Naive thymus-derived CD4-positive, alpha-beta T cell (primary cell): ENCODE measurements at regions of chr3 and their contacts with region 1.

Region 1: DNA sequence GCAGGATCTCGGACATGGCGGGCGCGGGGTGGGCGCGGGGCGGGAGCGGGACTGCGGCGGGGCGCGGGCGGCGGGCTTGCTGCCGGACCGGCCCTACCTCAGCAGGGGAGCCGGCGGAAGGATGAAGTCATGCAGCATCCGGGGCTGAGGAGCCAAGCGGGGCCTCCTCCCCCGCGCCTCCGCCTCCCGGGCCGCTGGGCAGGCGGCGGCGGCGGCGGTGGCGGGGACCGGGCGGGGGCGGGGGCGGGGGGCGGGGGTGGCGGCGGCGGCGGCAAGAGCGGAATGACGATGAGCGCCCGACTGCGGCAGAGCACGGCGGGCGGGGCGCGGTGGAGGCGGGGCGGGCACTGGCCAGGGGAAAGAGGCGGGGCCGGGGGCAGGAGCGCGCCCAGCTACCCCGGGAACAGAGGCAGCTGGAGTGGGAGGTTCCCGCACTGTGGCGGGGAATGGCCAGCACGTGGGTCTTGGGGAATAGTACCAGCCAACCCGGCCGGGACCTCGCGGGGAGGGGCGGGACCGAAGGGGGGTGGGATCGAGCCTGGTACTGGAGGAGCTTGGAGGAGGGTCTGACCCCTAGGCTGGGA is at the start of gene CAMK2N2:
- DNase-seq: peak in 2 of 9 donors; percentile 26 to 72
- ATAC-seq: peak; percentile 62
- H3K4me3 ChIP-seq: peak within 1 kb of the TSS; percentile 35
- H3K4me3 Mint-ChIP-seq: peak within 1 kb of the TSS; percentile 80 to 98 (median 88)
- H3K27ac ChIP-seq: no peak within 1 kb of the TSS
- H3K27ac Mint-ChIP-seq: peak within 1 kb of the TSS in 6 of 9 donors; percentile 0 to 63 (median 6)
- H3K4me1 ChIP-seq: peaks cover 15 to 20% of the 10 kb centered on the region in 2 donors
- H3K4me1 Mint-ChIP-seq: peaks cover 18 to 27% (median 21%) of the 10 kb centered on the region in 7 donors
- H3K27me3 ChIP-seq: peaks cover 0 to 18% of the 10 kb centered on the region in 2 donors
- H3K27me3 Mint-ChIP-seq: peaks cover 37 to 57% (median 38%) of the 10 kb centered on the region in 5 donors
- total RNA-seq, gene CAMK2N2: not detected

Region 2: DNA sequence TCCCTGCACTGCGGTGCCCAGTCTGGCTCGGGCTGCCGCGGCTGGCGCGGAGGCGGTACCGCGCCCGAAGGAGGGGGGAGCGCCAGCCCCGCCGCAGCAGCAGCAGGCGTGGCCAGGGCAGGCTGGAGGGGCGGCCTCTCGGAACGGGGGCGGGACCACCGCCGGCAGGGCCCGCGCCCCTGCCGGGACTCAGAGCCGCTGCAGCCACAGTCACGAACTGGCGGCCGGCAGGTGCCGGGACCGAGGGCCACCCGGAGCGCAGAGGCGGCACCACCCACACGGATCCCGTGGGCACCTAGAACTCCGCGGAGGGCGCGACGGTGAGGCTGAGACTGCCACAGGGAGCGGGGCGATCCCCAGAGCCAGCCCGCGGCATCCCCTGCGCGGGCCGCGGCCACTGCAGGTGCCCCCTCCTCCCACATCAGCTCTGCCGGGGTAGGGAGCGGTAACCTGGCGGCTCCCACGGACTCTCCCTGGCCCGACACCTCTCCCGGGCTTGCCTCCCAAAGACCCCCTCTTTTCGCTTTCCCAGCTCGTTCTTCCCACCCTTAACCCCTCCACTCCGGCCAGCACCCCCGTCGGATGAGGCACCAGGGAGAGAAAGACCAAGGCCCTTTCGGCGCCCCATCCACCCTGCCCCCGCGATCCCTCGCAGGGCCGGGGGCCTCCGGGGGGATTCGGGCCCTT is 31.8 kb before region 1 on chr3 and contains the start of gene VWA5B2:
- CTCF ChIA-PET with region 1: interaction called, 3 read pairs
- POLR2A ChIA-PET with region 1: no interaction called
- intact Hi-C with region 1: loop called in 1 of 2 experiments (anchors 5 kb)
- DNase-seq: peak; percentile 58 to 72 (median 66)
- ATAC-seq: peak; percentile 96
- H3K4me3 ChIP-seq: peak within 1 kb of the TSS; percentile 58
- H3K4me3 Mint-ChIP-seq: peak within 1 kb of the TSS; percentile 41 to 82 (median 74)
- H3K27ac ChIP-seq: no peak within 1 kb of the TSS
- H3K27ac Mint-ChIP-seq: no peak within 1 kb of the TSS
- H3K4me1 ChIP-seq: peaks cover 0 to 5% of the 10 kb centered on the region in 2 donors
- H3K4me1 Mint-ChIP-seq: peaks cover 8 to 14% (median 10%) of the 10 kb centered on the region in 7 donors
- H3K27me3 ChIP-seq: peaks cover 4 to 17% of the 10 kb centered on the region in 2 donors
- H3K27me3 Mint-ChIP-seq: peaks cover 46 to 65% (median 57%) of the 10 kb centered on the region in 5 donors
- total RNA-seq, gene VWA5B2: not detected

Region 3: DNA sequence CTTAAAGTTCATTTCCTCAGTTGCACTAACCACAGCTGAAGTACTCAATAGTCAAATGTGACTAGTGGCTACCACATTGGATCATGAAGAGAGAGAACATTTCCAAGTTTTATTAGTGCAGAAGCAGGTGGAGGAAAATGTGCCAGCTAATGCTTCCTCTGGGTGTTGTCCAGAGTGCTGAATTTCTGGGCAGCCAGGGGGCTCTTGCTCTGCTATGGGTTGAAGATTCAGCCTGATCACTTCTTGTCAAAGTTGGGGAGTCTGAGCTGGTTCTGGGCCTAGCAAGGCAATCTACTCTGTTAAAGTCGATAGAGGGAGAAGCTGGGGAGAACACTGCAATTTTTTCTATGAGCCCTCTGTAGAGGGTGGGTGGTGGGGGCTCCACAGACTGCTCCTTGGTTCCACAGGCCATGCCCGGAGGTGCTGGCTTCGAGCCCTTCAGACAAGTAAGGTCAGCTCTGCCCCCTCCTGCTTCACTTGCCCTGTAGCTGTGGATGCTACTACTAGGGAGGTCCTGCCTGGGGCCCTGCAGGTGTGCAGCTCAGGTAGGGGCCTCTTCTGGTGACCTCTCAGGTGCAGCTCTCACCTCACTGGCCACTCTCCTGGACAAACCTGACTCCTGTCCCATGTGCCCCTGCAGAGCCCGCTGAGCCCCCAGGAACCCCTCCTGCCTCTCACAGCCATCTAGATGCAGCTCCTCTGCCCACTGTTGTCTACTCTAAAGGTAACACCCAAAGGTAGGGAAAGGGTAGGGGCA is 20.8 kb before region 1 on chr3:
- CTCF ChIA-PET with region 1: no interaction called
- POLR2A ChIA-PET with region 1: no interaction called
- intact Hi-C with region 1: loop called in 1 of 2 experiments (anchors 1 kb)
- DNase-seq: no peak
- ATAC-seq: no peak
- H3K4me3 ChIP-seq: no peak overlapping the region
- H3K4me3 Mint-ChIP-seq: no peak overlapping the region
- H3K27ac ChIP-seq: no peak overlapping the region
- H3K27ac Mint-ChIP-seq: no peak overlapping the region
- H3K4me1 ChIP-seq: no peaks in the 10 kb centered on the region
- H3K4me1 Mint-ChIP-seq: peaks cover 0 to 6% (median under 1%) of the 10 kb centered on the region in 7 donors
- H3K27me3 ChIP-seq: no peaks in the 10 kb centered on the region
- H3K27me3 Mint-ChIP-seq: no peaks in the 10 kb centered on the region